ENCODE measurements at regions of chr6 and their contacts with region 1.

Region 1: DNA sequence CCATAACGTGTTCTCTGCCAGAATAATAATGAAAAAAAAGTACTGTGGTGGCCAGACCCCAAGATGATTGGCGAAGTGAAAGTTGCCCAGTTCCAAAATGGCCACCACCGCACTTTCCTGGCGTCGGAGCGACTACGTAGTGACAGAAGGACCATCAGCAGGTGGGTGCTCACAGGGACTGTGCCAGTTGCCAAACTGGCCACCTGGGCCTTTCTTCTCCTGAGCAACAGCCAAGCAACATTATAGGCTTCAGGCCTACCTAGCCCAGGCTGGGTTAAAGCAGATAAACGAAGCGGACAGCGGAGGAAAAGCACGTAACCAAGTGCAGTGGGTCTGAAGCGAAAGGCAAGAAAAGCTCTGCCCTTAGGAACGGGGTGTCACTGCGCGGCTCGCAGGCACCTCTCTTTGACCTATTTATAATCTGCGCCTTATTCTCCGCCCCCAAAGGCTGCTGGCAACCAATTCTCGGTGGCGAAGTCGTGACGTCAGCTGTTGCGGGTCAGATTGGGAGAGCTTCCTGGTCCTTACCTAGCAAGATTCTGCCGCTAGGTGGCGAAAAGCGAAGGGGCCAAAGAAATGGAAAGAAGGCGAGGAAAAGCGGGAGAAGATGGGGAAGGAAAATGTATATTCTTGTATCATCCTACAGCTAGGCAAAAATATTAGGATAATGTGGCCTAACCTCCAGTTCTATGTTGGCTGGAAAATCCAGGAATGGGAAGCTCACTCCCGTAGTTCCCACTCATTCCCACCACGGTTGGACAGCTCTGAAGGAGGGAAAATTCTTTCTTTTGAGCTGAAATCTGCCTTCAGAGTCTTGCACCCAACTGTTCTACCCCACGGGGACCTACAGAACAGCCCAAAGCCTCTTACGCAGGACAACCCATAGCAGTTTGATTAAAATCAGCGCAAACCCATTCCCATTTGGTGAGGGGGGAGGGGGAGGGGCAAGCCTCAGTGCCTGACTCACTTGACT is 6.9 kb upstream of the MOG start:
- DNase-seq: peak; percentile 97
- CTCF ChIP-seq: peak; percentile 87

Region 2: GRCh38 chr6:29486577-29486976 is 163.4 kb before region 1 on chr6:
- CTCF ChIA-PET with region 1: no interaction called
- POLR2A ChIA-PET with region 1: no interaction called
- DNase-seq: no peak
- CTCF ChIP-seq: no peak

Region 3: GRCh38 chr6:29624520-29624961 is 25.4 kb before region 1 on chr6:
- CTCF ChIA-PET with region 1: interaction called, 35 read pairs
- POLR2A ChIA-PET with region 1: no interaction called
- DNase-seq: no peak
- CTCF ChIP-seq: no peak

Region 4: GRCh38 chr6:29665942-29666825 is 16.2 kb after region 1 on chr6:
- CTCF ChIA-PET with region 1: interaction called, 192 read pairs
- POLR2A ChIA-PET with region 1: interaction called, 3 read pairs
- DNase-seq: peak; percentile 43
- CTCF ChIP-seq: no peak

Region 5: GRCh38 chr6:29696155-29697125 is 46.5 kb after region 1 on chr6:
- CTCF ChIA-PET with region 1: interaction called, 29 read pairs
- POLR2A ChIA-PET with region 1: no interaction called
- DNase-seq: peak; percentile 52
- CTCF ChIP-seq: peak; percentile 52

Region 6: GRCh38 chr6:29720863-29721262 is 70.9 kb after region 1 on chr6:
- CTCF ChIA-PET with region 1: interaction called, 14 read pairs
- POLR2A ChIA-PET with region 1: no interaction called
- DNase-seq: no peak
- CTCF ChIP-seq: peak; percentile 51

Region 7: GRCh38 chr6:29752451-29753308 is 102.7 kb after region 1 on chr6:
- CTCF ChIA-PET with region 1: interaction called, 65 read pairs
- POLR2A ChIA-PET with region 1: no interaction called
- DNase-seq: peak; percentile 87
- CTCF ChIP-seq: peak; percentile 97

Region 8: DNA sequence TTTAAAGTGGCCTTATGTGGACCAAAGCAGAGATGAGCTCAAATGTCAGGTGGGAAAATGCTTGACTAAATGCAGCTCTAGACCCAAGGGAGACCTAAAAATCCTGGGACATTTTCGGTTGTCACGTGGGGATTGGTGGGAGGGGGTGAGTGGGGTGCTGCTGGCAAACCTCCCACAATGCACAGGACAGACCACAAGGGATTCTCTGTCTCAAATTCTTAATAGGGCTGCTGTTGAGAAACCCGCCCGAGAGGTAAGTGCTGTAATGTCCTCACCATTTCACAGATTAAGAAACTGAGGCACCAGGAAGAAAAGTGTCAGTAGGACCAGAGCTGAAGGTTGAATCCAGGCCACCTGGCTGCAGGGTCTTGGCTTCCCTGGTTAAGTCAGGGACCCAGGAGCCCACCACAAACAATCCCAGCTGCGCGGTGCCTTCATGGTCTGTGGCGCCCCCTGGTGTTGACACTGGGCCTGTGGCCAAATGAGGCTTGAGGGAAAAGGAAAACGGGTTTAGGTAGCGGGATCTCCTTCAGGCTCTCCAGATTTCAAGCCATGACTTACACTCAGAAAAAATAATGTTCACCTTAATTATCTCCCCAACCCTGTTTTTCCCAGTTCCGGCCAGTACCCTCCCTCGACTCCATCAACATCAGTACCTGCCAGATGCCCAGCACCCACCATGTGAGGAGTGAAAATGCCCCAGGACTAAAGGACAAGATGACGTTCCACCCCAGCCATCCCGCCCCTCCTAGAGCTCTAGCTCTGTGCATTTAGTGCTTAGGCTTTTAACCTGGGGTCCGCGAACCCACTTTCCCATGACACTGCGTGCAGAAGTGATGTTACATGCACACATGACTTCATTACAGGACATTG is 184.8 kb after region 1 on chr6:
- CTCF ChIA-PET with region 1: interaction called, 18 read pairs
- POLR2A ChIA-PET with region 1: no interaction called
- DNase-seq: no peak
- CTCF ChIP-seq: peak; percentile 77

Region 9: DNA sequence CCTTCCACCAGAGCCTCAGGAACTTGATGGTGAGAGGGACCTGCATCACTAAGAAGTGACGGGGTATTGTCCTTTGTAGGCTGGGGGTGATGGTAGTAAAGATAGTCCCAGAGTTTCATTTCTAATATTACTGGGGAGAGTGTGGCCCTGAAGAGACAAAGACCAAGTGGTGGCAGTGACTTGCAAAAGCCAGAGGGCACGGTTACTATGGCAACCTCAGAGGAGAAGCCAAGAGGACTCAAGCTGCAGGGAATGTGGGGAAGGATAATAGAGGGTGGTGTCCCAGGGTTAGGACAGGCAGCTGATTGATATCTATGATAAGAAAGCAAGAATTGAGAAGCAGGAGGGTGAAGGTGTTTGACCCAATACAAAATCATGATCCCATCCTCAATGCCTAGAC is 220.1 kb after region 1 on chr6:
- CTCF ChIA-PET with region 1: no interaction called
- POLR2A ChIA-PET with region 1: no interaction called
- DNase-seq: no peak
- CTCF ChIP-seq: no peak